Endothelial cell of umbilical vein (primary cell): ENCODE measurements at regions of chr15 and their contacts with region 1.

Region 1: GRCh38 chr15:52568601-52569256 is at the start of gene ARPP19:
- DNase-seq: peak; percentile 86
- H3K4me3 ChIP-seq: peak within 1 kb of the TSS; percentile 45 to 79 (median 75)
- H3K27ac ChIP-seq: peak within 1 kb of the TSS; percentile 80
- H3K4me1 ChIP-seq: peaks cover 24% of the 10 kb centered on the region
- H3K27me3 ChIP-seq: no peaks in the 10 kb centered on the region
- CTCF ChIP-seq: no peak
- POLR2A ChIP-seq: peak; percentile 88
- total RNA-seq, gene ARPP19: 176 and 191 TPM in 2 replicates

Region 2: DNA sequence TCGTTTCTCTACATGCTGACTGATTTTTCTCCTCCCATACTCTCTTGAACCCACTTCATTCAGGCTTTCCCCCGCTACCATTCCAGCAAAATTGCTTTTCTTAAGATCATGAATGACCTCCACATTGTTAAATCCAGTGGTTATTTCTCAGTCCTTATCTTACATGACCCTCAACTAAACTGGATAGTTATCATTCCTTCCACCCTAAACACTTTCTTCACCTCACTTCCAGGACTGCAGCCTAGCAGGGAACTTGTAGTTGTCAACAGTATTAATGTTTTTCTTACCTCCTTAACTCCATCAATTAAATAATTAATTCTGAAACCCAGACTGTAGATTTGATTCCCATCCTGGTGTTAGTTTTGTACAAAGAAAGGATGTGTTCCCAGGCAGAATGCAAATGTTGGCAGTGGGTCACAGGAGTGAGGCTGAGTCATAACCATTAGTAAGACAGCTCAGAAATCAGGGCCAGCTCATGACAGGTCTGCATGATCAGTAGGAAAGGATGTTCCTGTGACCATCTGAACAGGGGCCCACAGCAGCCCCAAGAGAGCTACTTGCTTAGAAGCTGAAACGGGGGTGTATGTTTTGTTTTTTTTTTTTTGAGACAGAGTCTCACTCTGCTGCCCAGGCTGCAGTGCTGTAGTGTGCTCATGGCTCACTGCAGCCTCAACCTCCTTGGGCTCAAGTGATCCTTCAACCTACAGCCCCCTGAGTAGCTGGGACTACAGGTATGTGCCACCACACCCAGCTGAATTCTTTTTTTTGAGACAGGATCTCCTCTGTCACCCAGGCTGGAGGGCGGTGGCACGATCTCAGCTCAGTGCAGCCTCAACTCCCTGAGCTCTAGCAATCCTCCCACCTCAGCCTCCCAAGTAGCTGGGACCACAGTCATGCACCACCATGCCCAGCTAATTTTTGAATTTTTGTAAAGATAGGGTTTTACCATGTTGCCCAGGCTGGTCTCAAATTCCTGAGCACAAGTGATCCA is 465.2 kb before region 1 on chr15:
- CTCF ChIA-PET with region 1: no interaction called
- POLR2A ChIA-PET with region 1: no interaction called
- dilution Hi-C with region 1: no loop called
- intact Hi-C with region 1: no loop called
- DNase-seq: peak; percentile 98
- H3K4me3 ChIP-seq: no peak overlapping the region
- H3K27ac ChIP-seq: peak overlapping the region; percentile 77
- H3K4me1 ChIP-seq: peaks cover 19% of the 10 kb centered on the region
- H3K27me3 ChIP-seq: no peaks in the 10 kb centered on the region
- CTCF ChIP-seq: no peak
- POLR2A ChIP-seq: no peak

Region 3: GRCh38 chr15:52331490-52332240 is 237.1 kb before region 1 on chr15:
- CTCF ChIA-PET with region 1: interaction called, 8 read pairs
- POLR2A ChIA-PET with region 1: no interaction called
- dilution Hi-C with region 1: no loop called
- intact Hi-C with region 1: loop called (anchors 5 kb)
- DNase-seq: peak; percentile 68
- H3K4me3 ChIP-seq: no peak overlapping the region
- H3K27ac ChIP-seq: no peak overlapping the region
- H3K4me1 ChIP-seq: peaks cover 6% of the 10 kb centered on the region
- H3K27me3 ChIP-seq: no peaks in the 10 kb centered on the region
- CTCF ChIP-seq: peak; percentile 36 to 45
- POLR2A ChIP-seq: no peak

Region 4: GRCh38 chr15:52481915-52482314 is 86.8 kb before region 1 on chr15:
- CTCF ChIA-PET with region 1: no interaction called
- POLR2A ChIA-PET with region 1: no interaction called
- dilution Hi-C with region 1: no loop called
- intact Hi-C with region 1: loop called (anchors 2 kb)
- DNase-seq: peak; percentile 75
- H3K4me3 ChIP-seq: no peak overlapping the region
- H3K27ac ChIP-seq: peak overlapping the region; percentile 92
- H3K4me1 ChIP-seq: peaks cover 63% of the 10 kb centered on the region
- H3K27me3 ChIP-seq: no peaks in the 10 kb centered on the region
- CTCF ChIP-seq: no peak
- POLR2A ChIP-seq: peak; percentile 44

Region 5: DNA sequence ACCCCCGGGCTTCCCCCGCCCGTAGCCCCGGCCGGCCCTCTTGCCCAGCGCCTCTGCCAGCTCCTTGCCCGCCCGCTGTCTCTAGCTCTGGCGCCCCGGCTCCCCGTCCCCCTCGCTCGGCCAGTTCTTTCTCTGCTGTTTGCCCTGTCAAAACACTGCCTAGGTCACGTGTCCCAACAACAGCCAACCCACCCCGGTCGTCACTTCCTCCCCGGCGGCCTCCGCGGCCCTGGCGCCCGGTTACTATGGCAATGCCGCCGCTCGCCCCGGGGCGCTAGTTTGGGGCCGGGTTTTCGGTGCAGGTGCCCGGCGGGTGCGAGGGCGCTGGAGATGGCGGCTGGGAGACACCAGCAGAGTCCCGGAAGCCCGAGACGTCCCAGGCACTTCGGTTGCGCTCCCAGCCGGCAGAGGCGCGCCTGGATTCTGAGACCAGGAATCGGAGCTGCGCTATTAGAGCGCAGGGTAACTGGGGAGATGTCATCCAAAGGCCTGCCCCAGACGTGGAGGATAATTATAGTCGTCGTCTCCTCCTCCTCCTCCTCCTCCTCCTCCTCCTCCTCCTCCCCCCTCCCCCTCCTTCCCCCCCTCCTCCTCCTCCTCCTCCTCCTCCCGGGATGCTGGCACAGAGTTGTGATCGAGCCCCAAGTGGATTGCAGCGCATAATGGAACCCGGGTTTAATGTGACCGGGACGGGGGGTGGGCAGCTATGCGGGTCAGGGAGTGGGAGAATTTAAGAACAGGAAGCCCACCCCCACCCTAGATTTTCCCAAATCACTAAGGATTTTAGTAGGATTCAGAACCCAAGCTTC is 110.7 kb after region 1 on chr15 and contains the start of gene ATOSA:
- CTCF ChIA-PET with region 1: no interaction called
- POLR2A ChIA-PET with region 1: no interaction called
- dilution Hi-C with region 1: no loop called
- intact Hi-C with region 1: loop called (anchors 2 kb)
- DNase-seq: peak; percentile 90
- H3K4me3 ChIP-seq: peak within 1 kb of the TSS; percentile 59 to 87 (median 80)
- H3K27ac ChIP-seq: peak within 1 kb of the TSS; percentile 92
- H3K4me1 ChIP-seq: peaks cover 18% of the 10 kb centered on the region
- H3K27me3 ChIP-seq: peaks cover 11 to 17% of the 10 kb centered on the region in 2 experiments
- CTCF ChIP-seq: no peak
- POLR2A ChIP-seq: no peak
- total RNA-seq, gene ATOSA: 39.1 and 41.1 TPM in 2 replicates

Region 6: GRCh38 chr15:52695183-52695582 is 126.5 kb after region 1 on chr15:
- CTCF ChIA-PET with region 1: no interaction called
- POLR2A ChIA-PET with region 1: no interaction called
- dilution Hi-C with region 1: no loop called
- intact Hi-C with region 1: no loop called
- DNase-seq: no peak
- H3K4me3 ChIP-seq: no peak overlapping the region
- H3K27ac ChIP-seq: no peak overlapping the region
- H3K4me1 ChIP-seq: no peaks in the 10 kb centered on the region
- H3K27me3 ChIP-seq: peaks cover 4 to 6% of the 10 kb centered on the region in 2 experiments
- CTCF ChIP-seq: no peak
- POLR2A ChIP-seq: no peak

Region 7: DNA sequence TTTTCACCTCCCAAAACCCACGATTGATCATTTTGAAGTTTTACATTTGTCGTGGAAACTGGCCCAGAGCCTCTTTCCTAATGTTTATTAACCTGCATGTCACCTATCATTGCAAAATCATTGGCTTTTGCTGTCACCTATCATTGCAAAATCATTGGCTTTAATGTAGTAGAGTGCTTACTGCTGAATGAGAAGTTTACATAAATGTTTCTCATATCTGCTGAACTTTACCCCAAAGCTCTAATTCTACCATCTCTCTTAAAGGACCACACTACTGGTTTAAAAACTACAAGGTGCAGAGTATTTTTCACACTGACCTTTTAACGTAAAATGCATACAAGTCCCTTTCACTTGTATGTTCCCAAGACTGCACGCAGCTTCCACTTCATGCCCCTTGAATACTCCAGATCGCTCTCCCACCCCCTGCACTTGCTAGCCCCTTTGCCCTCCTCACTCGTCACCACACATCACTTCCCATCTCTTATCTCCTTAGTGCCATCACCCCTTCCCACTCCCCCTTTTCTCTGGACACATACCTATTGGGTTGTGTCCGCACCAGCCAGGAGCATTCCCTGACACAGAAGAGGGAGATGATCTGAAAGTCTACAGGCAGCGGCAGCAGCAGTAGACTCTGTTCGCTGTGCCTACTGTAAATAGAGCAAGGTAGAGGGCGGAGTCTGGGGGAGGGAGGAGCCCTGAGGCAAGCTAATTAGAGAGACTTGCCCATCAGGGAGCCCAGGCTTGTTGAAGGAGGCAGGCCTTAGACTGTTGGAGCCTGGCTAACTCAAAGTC is 140.7 kb after region 1 on chr15:
- CTCF ChIA-PET with region 1: no interaction called
- POLR2A ChIA-PET with region 1: no interaction called
- dilution Hi-C with region 1: no loop called
- intact Hi-C with region 1: no loop called
- DNase-seq: no peak
- H3K4me3 ChIP-seq: no peak overlapping the region
- H3K27ac ChIP-seq: no peak overlapping the region
- H3K4me1 ChIP-seq: no peaks in the 10 kb centered on the region
- H3K27me3 ChIP-seq: peaks cover 5 to 14% of the 10 kb centered on the region in 2 experiments
- CTCF ChIP-seq: no peak
- POLR2A ChIP-seq: no peak

Region 8: DNA sequence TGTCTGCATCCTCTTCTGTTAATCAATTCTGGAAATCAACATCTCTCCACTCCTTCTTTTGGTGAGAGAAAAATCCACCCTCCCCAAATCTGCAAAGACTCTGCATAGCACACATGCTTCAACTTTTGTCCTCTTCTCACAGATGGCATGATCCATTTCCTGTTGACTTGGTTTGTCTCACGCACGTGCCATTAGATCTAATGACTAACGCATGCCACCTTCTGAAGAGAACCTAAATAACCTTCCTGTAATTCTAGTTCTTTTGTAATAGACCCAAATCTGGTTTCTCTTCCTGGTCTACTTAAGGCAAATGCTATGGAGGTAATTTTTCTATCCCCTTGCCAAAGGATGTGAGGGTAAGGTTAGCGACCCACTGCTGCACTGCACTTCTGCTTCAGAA is 161.4 kb after region 1 on chr15:
- CTCF ChIA-PET with region 1: no interaction called
- POLR2A ChIA-PET with region 1: no interaction called
- dilution Hi-C with region 1: no loop called
- intact Hi-C with region 1: loop called (anchors 1 kb)
- DNase-seq: peak; percentile 92
- H3K4me3 ChIP-seq: no peak overlapping the region
- H3K27ac ChIP-seq: peak overlapping the region; percentile 73
- H3K4me1 ChIP-seq: peaks cover 38% of the 10 kb centered on the region
- H3K27me3 ChIP-seq: no peaks in the 10 kb centered on the region
- CTCF ChIP-seq: no peak
- POLR2A ChIP-seq: no peak